Left cardiac atrium (tissue), 4 donors: ENCODE measurements at regions of chr1 and their contacts with region 1.

Region 1: DNA sequence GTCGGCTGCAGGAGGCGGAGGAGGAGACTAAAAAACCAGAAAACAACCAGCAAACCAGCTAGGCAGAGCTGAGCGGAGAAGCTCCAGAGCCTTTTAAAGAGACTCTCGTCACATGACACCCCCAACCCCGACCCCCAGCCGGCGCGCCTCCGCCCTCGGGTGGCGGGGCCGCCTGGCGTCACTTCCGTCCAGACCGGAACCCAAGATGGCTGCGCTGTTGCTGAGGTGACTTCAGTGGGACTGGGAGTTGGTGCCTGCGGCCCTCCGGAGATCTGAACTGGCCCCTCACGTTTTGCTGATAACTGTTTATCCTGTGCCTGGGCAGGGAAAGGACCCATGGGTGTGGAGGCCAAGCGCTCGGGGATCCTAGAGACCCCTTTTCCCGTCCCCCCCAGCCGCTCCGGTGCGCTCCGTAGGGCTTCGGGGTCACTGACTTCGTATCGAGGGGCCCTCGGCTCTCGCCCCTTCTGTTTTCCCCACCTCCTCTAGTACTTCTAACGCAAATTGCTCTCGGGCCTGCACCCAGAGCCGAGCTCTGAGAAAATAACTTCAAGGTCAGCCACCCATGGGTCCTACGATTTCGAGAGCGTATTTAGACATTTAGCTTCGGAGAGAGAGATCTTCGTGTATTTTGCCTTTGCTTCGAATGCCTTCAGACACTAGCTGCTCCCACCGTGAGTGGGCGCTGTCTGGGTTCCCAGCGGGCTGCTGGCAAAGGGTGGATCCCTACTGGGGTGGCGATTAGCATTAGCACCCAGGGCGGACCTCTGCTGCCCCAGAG is at the start of gene SDHC:
- DNase-seq: peak; percentile 93
- ATAC-seq: peak; percentile 99 to 100
- total RNA-seq, gene SDHC: 241 to 284 TPM

Region 2: DNA sequence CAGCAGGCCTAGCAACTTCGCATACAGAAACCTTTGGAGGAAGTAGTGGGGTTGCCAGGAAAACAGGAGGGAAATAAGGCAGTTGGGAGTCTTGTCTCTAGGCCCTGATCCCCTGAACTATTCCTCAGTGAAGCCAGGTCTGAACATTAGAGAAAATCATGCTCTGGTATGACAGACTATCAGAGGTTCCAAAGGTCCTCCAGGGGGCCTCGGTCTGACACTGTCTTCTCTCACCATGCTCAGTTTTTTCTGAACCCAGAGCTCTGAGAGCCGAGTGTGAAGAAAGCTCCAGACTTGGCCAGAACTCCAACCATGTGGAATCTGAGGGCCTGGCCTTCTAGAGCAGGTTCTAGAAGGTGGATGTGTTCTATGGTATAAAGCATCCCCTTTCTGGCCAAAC is 84.5 kb before region 1 on chr1:
- intact Hi-C with region 1: no loop called
- DNase-seq: no peak
- ATAC-seq: no peak

Region 3: GRCh38 chr1:161374373-161374772 is 60.0 kb after region 1 on chr1:
- intact Hi-C with region 1: loop called in 1 of 2 experiments (anchors 10 kb)
- DNase-seq: no peak
- ATAC-seq: no peak